ENCODE measurements at regions of chr5 and their contacts with region 1.

Region 1: GRCh38 chr5:168679515-168679920 is 100.3 kb upstream of the PANK3 start:
- DNase-seq: peak; percentile 84
- ATAC-seq: peak; percentile 28
- H3K4me3 Mint-ChIP-seq: no peak overlapping the region
- H3K27ac Mint-ChIP-seq: no peak overlapping the region
- H3K4me1 Mint-ChIP-seq: peaks cover 28% of the 10 kb centered on the region
- H3K27me3 Mint-ChIP-seq: no peaks in the 10 kb centered on the region

Region 2: DNA sequence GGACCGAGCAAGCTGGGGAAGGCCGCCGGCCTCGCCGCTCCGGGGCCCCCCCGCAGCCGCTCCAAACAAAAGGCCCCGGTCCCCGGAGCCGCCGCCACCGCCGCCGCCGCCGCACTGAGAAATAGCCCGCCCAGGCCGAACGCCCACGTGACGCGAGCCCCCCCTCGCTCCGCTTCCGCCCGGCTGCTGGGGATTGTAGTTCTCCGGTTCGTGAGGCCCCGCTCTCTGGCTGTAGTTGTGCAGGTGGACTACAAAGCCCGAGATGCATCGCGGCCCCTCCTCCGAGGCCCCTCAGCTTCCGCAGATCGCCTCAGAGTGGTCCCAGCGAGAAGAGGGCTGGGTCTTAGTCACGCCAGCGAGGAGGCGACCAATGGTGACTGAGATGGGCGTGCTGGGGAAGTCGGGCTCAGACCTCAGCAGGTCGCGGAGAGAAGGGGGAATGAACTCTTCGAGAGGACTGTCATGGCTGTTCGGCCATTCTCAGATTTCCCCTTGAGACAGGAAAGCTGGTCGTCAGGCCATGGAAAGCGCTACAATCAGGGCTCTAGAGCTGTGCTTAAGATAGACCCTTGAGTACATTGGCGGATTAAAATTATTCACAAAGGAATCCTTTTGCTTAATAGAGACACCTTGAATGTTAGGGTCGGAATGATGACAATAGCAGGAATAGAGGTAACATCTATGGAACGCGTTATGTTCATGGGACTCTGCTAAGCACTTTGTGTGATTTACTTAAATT is 99.9 kb before region 1 on chr5:
- CTCF ChIA-PET with region 1: no interaction called
- POLR2A ChIA-PET with region 1: no interaction called
- intact Hi-C with region 1: no loop called
- DNase-seq: peak; percentile 98
- ATAC-seq: peak; percentile 98
- H3K4me3 Mint-ChIP-seq: peak overlapping the region; percentile 91
- H3K27ac Mint-ChIP-seq: peak overlapping the region; percentile 99
- H3K4me1 Mint-ChIP-seq: peaks cover 34% of the 10 kb centered on the region
- H3K27me3 Mint-ChIP-seq: no peaks in the 10 kb centered on the region

Region 3: GRCh38 chr5:168712280-168712924 is 32.9 kb after region 1 on chr5:
- CTCF ChIA-PET with region 1: no interaction called
- POLR2A ChIA-PET with region 1: no interaction called
- intact Hi-C with region 1: no loop called
- DNase-seq: no peak
- ATAC-seq: no peak
- H3K4me3 Mint-ChIP-seq: no peak overlapping the region
- H3K27ac Mint-ChIP-seq: no peak overlapping the region
- H3K4me1 Mint-ChIP-seq: peaks cover 11% of the 10 kb centered on the region
- H3K27me3 Mint-ChIP-seq: no peaks in the 10 kb centered on the region

Region 4: GRCh38 chr5:168874713-168875380 is 195.3 kb after region 1 on chr5:
- CTCF ChIA-PET with region 1: no interaction called
- POLR2A ChIA-PET with region 1: no interaction called
- intact Hi-C with region 1: loop called in 1 of 2 experiments (anchors 2 kb)
- DNase-seq: peak; percentile 26
- ATAC-seq: peak; percentile 88
- H3K4me3 Mint-ChIP-seq: no peak overlapping the region
- H3K27ac Mint-ChIP-seq: no peak overlapping the region
- H3K4me1 Mint-ChIP-seq: peaks cover 5% of the 10 kb centered on the region
- H3K27me3 Mint-ChIP-seq: peaks cover 18% of the 10 kb centered on the region

Region 5: GRCh38 chr5:168947212-168947868 is 267.8 kb after region 1 on chr5:
- CTCF ChIA-PET with region 1: no interaction called
- POLR2A ChIA-PET with region 1: no interaction called
- intact Hi-C with region 1: loop called (anchors 1 kb)
- DNase-seq: peak; percentile 73
- ATAC-seq: peak; percentile 58
- H3K4me3 Mint-ChIP-seq: no peak overlapping the region
- H3K27ac Mint-ChIP-seq: no peak overlapping the region
- H3K4me1 Mint-ChIP-seq: peaks cover 8% of the 10 kb centered on the region
- H3K27me3 Mint-ChIP-seq: no peaks in the 10 kb centered on the region

Region 6: DNA sequence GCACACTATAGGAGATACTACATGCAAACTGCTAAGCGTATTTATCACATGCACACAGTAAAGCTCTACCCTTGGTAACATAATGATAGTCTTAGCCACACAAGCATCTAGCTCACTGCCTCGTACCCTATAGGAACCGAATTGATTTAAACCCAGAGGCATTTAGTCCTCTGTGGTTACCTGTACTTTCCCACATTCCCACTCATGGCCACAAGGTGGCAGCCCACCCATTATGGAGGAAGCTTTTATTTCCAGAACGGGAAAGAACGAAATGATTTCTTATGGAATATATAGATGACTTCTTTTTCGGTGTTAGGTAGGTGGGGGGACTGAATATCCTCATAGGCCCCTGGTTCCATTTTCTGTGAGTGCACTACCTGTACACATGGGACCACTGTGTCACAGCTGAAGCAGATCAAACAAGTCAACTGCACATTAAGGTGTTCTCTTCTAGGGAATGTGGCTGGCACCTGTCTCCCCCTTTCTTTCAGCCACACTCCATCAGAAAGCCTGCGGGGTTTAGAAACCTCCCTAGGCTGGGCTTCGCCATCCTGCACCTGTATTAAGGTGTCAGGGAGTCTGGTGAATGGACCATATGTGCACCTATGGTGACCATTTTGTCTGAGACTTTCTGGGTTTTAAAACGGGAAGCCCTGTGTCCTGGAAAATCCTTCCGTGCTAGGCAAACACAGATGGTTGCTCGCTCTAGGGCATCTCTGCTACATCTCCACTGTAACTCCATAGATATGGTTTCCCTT is 308.2 kb after region 1 on chr5:
- CTCF ChIA-PET with region 1: interaction called, 4 read pairs
- POLR2A ChIA-PET with region 1: no interaction called
- intact Hi-C with region 1: loop called (anchors 1 to 5 kb)
- DNase-seq: peak; percentile 79
- ATAC-seq: peak; percentile 63
- H3K4me3 Mint-ChIP-seq: no peak overlapping the region
- H3K27ac Mint-ChIP-seq: no peak overlapping the region
- H3K4me1 Mint-ChIP-seq: peaks cover 4% of the 10 kb centered on the region
- H3K27me3 Mint-ChIP-seq: peaks cover 9% of the 10 kb centered on the region

Region 7: GRCh38 chr5:169302491-169303118 is 623.1 kb after region 1 on chr5:
- CTCF ChIA-PET with region 1: interaction called, 3 read pairs
- POLR2A ChIA-PET with region 1: no interaction called
- intact Hi-C with region 1: loop called (anchors 1 to 2 kb)
- DNase-seq: peak; percentile 83
- ATAC-seq: peak; percentile 78
- H3K4me3 Mint-ChIP-seq: no peak overlapping the region
- H3K27ac Mint-ChIP-seq: no peak overlapping the region
- H3K4me1 Mint-ChIP-seq: peaks cover 13% of the 10 kb centered on the region
- H3K27me3 Mint-ChIP-seq: peaks cover 56% of the 10 kb centered on the region